ENCODE measurements at regions of chr14 and their contacts with region 1.

Region 1: GRCh38 chr14:104768437-104769323 is 15.7 kb downstream of the SIVA1 start:
- DNase-seq: peak; percentile 94
- H3K4me3 ChIP-seq: no peak overlapping the region; a peak in 1 of 4 replicates
- H3K27ac ChIP-seq: peak overlapping the region in 1 of 2 experiments; percentile 35; a peak in 1 of 4 replicates
- H3K4me1 ChIP-seq: peaks cover 0 to 7% of the 10 kb centered on the region in 2 experiments; a peak in 1 of 4 replicates
- H3K27me3 ChIP-seq: no peaks in the 10 kb centered on the region
- CTCF ChIP-seq: peak; percentile 70
- EP300 ChIP-seq: no peak
- RAD21 ChIP-seq: peak; percentile 88

Region 2: DNA sequence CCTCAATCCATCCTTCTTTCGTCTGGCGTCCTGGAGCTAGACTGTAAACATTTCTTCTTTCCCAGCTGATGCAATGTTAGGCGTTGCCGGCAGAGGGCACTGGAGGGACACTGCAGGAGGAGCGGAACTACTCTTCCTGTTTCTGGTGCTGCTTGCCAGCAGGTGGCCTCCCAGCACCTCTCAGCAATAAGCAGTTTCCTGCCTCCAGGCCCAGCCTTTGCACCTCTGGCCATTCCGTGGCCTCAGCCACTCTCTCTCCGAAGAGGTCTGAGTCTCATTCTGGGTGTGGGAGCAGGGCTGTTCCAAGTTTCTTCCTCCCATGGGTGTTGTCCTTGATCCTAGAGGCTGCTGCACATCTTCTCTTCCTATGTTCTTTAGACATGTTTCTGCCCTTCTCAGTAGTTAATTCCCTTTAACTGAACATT is 690.6 kb before region 1 on chr14:
- CTCF ChIA-PET with region 1: no interaction called
- POLR2A ChIA-PET with region 1: no interaction called
- DNase-seq: peak; percentile 92
- H3K4me3 ChIP-seq: peak overlapping the region in 1 of 2 experiments; percentile 33; a peak in 1 of 4 replicates
- H3K27ac ChIP-seq: no peak overlapping the region
- H3K4me1 ChIP-seq: peaks cover 0 to 10% of the 10 kb centered on the region in 2 experiments; a peak in 1 of 4 replicates
- H3K27me3 ChIP-seq: no peaks in the 10 kb centered on the region; the same call in 1 of the 2 replicates
- CTCF ChIP-seq: peak; percentile 99
- EP300 ChIP-seq: no peak
- RAD21 ChIP-seq: peak; percentile 98

Region 3: GRCh38 chr14:104224506-104225277 is 544.0 kb before region 1 on chr14:
- CTCF ChIA-PET with region 1: no interaction called
- POLR2A ChIA-PET with region 1: no interaction called
- DNase-seq: peak; percentile 67
- H3K4me3 ChIP-seq: peak overlapping the region in 1 of 2 experiments; percentile 24; a peak in 1 of 4 replicates
- H3K27ac ChIP-seq: peak overlapping the region in 1 of 2 experiments; percentile 100; a peak in 2 of 4 replicates
- H3K4me1 ChIP-seq: peaks cover 0 to 66% of the 10 kb centered on the region in 2 experiments; a peak in 2 of 4 replicates
- H3K27me3 ChIP-seq: no peaks in the 10 kb centered on the region
- CTCF ChIP-seq: peak; percentile 55
- EP300 ChIP-seq: no peak
- RAD21 ChIP-seq: no peak; the same call in 1 of the 2 replicates

Region 4: DNA sequence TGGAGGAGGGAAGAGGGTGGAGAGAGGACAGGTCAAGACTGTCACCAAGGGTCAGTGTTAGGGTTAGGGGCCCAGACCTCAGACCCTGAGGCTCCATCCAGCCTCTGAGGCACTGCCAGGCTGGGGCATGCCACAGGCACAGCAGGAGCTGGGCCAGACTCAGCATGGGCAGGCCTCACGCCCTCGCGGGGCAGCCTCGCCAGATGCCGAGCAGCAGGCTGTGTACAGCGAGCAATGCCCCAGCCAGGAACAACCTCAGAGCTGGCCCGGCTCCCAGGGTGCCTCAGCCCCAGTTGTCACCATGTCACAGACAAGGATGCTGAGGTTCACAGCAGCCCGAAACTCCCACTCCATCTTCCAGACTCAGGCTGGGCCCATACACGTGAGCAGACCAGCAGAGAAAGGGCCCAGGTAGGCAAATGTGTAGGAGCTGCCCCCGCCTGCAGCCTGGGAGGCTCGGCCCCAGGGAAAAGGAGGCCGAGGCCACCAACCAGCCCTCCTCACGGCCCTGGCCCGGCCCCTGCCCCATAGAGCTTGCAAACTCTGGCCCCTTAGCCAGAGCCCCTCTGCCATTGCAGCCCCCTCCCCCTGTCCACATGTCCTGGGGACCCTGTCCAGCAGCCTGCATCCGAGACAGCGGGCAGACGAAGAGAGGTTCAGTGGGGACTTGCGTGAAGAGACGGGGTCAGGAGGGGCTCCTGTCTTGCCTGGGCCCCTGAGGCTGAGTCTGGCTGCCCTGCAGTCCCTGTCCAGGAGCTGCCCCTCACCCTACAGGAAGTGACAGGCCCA is 181.7 kb before region 1 on chr14:
- CTCF ChIA-PET with region 1: no interaction called
- POLR2A ChIA-PET with region 1: no interaction called
- DNase-seq: peak; percentile 82
- H3K4me3 ChIP-seq: no peak overlapping the region
- H3K27ac ChIP-seq: peak overlapping the region in 1 of 2 experiments; percentile 97; a peak in 2 of 4 replicates
- H3K4me1 ChIP-seq: peaks cover 0 to 95% of the 10 kb centered on the region in 2 experiments; a peak in 1 of 4 replicates
- H3K27me3 ChIP-seq: no peaks in the 10 kb centered on the region
- CTCF ChIP-seq: no peak
- EP300 ChIP-seq: peak in 1 of 2 experiments; percentile 40; a peak in 1 of 4 replicates
- RAD21 ChIP-seq: no peak

Region 5: GRCh38 chr14:104778694-104779331 is 10.1 kb after region 1 on chr14:
- CTCF ChIA-PET with region 1: interaction called, 19 read pairs
- POLR2A ChIA-PET with region 1: no interaction called
- DNase-seq: no peak
- H3K4me3 ChIP-seq: no peak overlapping the region
- H3K27ac ChIP-seq: no peak overlapping the region
- H3K4me1 ChIP-seq: no peaks in the 10 kb centered on the region
- H3K27me3 ChIP-seq: no peaks in the 10 kb centered on the region
- CTCF ChIP-seq: no peak
- EP300 ChIP-seq: no peak
- RAD21 ChIP-seq: no peak

Region 6: DNA sequence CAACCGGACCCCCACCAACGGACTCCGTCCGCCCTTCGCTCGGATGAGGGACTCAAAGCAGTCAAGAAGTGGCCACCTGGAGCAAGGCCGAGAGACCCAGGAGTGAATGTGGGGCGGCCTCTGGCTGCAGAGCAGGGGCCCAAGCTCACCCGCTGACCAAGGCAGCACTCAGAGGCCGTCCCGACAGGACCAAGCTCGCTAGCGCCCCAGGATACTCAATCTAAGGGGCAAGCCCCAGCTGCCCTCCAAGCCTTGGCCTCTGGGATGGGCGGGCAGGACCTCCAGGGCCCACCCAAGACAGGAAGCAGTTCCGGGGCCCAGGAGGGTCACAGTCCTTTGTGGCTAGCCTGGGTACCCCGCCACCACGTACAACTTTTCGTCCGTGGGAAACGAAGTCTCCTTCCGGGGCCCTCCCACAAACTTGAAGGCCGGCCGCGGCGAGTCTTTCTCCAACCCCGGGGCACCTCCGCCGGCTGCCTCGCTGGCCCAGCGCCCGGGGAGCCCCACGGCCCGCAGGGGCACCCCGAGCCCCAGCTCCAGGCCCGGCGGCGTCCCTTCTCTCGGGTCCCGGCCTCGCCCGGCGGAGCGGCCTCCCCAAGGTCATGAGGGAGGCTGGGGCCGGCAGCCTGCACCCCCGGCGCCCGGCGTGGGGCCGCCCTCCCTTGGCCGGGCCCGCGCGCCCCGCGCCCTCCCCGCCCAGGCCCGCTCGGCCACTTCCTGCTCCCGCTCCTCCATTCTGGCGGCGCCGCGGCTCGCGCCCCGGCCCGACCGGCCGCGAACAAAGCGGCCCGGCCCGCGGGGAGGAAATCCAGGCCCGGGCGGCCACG is 26.2 kb after region 1 on chr14:
- CTCF ChIA-PET with region 1: interaction called, 35 read pairs
- POLR2A ChIA-PET with region 1: no interaction called
- DNase-seq: peak; percentile 82
- H3K4me3 ChIP-seq: peak overlapping the region; percentile 79 to 84
- H3K27ac ChIP-seq: peak overlapping the region; percentile 58 to 70; a peak in 3 of 4 replicates
- H3K4me1 ChIP-seq: peaks cover 6 to 45% of the 10 kb centered on the region in 2 experiments; a peak in 3 of 4 replicates
- H3K27me3 ChIP-seq: no peaks in the 10 kb centered on the region
- CTCF ChIP-seq: peak; percentile 14
- EP300 ChIP-seq: no peak
- RAD21 ChIP-seq: no peak

Region 7: DNA sequence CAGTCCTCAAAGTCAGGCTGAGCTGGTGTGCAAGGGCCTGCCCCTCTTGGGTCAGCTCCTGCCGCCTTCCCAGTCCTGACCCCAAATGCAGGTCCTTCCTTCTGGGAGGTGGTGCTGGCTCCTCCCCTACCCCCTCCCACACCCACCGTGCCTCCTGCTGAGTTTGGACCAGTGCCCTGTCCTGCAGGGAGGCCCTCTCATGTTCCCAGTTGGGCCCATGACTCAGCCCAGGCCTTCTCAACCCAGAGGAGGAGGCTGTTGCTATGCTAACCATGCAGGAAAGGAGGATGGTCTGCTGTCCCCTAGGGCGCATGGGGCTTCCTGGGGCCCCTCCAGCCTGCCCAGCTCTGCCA is 36.6 kb after region 1 on chr14:
- CTCF ChIA-PET with region 1: interaction called, 15 read pairs
- POLR2A ChIA-PET with region 1: no interaction called
- DNase-seq: peak; percentile 36
- H3K4me3 ChIP-seq: no peak overlapping the region
- H3K27ac ChIP-seq: peak overlapping the region in 1 of 2 experiments; percentile 15; a peak in 1 of 4 replicates
- H3K4me1 ChIP-seq: peaks cover 19 to 25% of the 10 kb centered on the region in 2 experiments; a peak in 3 of 4 replicates
- H3K27me3 ChIP-seq: no peaks in the 10 kb centered on the region
- CTCF ChIP-seq: no peak
- EP300 ChIP-seq: no peak; a peak in 1 of 4 replicates
- RAD21 ChIP-seq: no peak

Region 8: GRCh38 chr14:104826189-104826860 is 57.6 kb after region 1 on chr14:
- CTCF ChIA-PET with region 1: interaction called, 85 read pairs
- POLR2A ChIA-PET with region 1: interaction called, 3 read pairs
- DNase-seq: peak; percentile 95
- H3K4me3 ChIP-seq: peak overlapping the region; percentile 57 to 65
- H3K27ac ChIP-seq: peak overlapping the region in 1 of 2 experiments; percentile 35; a peak in 1 of 4 replicates
- H3K4me1 ChIP-seq: peaks cover 0 to 14% of the 10 kb centered on the region in 2 experiments; a peak in 1 of 4 replicates
- H3K27me3 ChIP-seq: no peaks in the 10 kb centered on the region
- CTCF ChIP-seq: peak; percentile 57
- EP300 ChIP-seq: no peak
- RAD21 ChIP-seq: peak; percentile 60

Measured in SK-N-SH (cell line).